ENCODE measurements at regions of chr5 and their contacts with region 1.

Region 1: GRCh38 chr5:126676195-126676624 is 75.5 kb downstream of the PHAX start:
- DNase-seq: peak; percentile 52
- H3K4me3 Mint-ChIP-seq: no peak overlapping the region
- H3K27ac Mint-ChIP-seq: peak overlapping the region; percentile 8
- H3K4me1 Mint-ChIP-seq: peaks cover 6% of the 10 kb centered on the region
- H3K27me3 Mint-ChIP-seq: peaks cover 3% of the 10 kb centered on the region

Region 2: DNA sequence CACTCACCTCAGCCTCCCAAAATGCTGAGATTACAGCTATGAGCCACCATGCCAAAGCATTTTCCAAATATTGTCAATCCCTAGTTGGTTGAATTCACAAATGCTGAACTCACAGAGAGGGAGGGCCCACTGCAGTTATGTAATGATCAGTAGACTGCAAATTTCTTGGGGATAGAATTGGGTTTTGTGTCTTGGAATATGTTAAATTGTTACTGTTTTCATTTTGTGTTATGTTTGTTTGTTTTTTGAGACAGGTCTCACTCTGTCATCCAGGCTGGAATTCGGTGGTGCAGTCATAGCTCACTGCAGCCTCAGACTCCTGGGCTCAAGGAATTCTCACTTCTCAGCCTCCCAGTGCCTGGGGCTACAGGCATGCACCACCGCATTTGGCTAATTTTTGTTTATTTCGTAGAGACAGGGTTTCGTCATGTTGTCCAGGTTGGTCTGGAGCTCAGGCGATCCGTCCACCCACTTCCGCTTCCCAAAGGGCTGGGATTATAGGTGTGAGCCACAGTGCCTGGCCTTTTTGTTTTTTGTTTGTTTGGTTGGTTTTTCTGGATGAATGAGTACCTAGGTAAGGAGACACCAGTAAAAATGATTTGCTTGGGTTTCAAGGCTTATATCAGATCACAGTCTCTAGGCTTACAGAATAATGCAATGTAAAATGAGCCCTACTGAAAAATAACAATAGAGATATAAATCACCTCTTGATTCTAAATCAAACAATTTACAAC is 69.2 kb after region 1 on chr5:
- intact Hi-C with region 1: loop called (anchors 1 kb)
- DNase-seq: no peak
- H3K4me3 Mint-ChIP-seq: no peak overlapping the region
- H3K27ac Mint-ChIP-seq: peak overlapping the region; percentile 40
- H3K4me1 Mint-ChIP-seq: peaks cover 60% of the 10 kb centered on the region
- H3K27me3 Mint-ChIP-seq: peaks cover 1% of the 10 kb centered on the region

Region 3: GRCh38 chr5:126801992-126802294 is 125.7 kb after region 1 on chr5:
- intact Hi-C with region 1: loop called (anchors 1 kb)
- DNase-seq: no peak
- H3K4me3 Mint-ChIP-seq: no peak overlapping the region
- H3K27ac Mint-ChIP-seq: peak overlapping the region; percentile 29
- H3K4me1 Mint-ChIP-seq: peaks cover 50% of the 10 kb centered on the region
- H3K27me3 Mint-ChIP-seq: no peaks in the 10 kb centered on the region

Region 4: GRCh38 chr5:127097278-127097677 is 421.1 kb after region 1 on chr5:
- intact Hi-C with region 1: no loop called
- DNase-seq: no peak
- H3K4me3 Mint-ChIP-seq: no peak overlapping the region
- H3K27ac Mint-ChIP-seq: no peak overlapping the region
- H3K4me1 Mint-ChIP-seq: no peaks in the 10 kb centered on the region
- H3K27me3 Mint-ChIP-seq: peaks cover 7% of the 10 kb centered on the region

Measured in activated T-helper 1 cell treated with anti-CD3 and anti-CD28 coated beads, Interleukin-12 subunit alpha, Interleukin-12 subunit beta, Interleukin-2, Interleukin-4 antibody, amounts not matched to agents 30 ng/mL and 10 ng/mL and 1 ng/mL, durations not matched to agents 14 hours and 24 hours and 36 hours (primary cell).